ENCODE measurements at regions of chr17 and their contacts with region 1.

Region 1: DNA sequence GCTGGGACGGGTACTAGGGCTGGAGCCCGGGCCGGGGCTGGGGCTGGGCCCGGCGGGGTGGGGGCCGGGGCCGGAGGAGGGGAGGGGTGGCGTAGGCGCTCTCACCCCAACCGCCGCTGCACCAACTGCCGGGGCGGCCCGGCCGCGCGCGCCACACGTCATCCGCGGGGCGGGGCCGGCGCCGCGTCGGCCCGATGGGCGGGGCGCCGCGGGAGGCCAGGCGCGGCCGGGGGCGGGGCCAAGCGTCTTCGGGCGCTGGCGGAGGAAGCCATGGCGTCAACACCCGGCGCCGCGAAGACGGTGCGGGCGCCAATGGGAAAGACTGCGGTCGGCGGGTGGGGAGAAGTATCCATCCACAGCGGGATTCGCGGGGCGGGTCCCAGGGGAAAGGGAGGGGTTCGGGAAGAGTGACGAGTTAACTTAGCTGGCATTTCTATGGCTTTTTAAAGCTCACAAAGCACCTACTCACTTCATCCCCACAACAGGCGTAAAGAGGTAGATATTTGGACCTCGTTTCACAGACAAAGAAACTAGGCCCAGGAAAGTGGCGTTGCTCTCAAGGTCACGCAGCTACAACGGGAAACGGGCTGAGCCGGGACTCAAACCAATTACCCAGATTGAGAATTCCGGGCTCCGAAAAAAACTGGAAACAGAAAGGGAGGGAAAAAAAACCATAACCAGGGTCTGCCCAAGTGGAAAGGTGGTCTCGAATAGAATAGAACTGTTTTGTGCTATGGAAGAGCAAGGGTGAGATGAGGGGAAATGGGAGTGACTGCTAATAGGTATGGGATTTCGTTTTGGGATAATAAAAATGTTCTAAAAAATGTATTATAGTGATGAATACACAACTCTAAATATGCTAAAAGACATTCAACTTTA is at the start of gene SPAG9:
- DNase-seq: peak; percentile 97
- H3K4me3 ChIP-seq: peak within 1 kb of the TSS; percentile 96 to 99 (median 96)
- H3K27ac ChIP-seq: peak within 1 kb of the TSS; percentile 100
- H3K4me1 ChIP-seq: peaks cover 31% of the 10 kb centered on the region
- H3K27me3 ChIP-seq: no peaks in the 10 kb centered on the region
- CTCF ChIP-seq: no peak
- POLR2A ChIP-seq: no peak
- total RNA-seq, gene SPAG9: 73.5 and 75.0 TPM in 2 replicates

Region 2: DNA sequence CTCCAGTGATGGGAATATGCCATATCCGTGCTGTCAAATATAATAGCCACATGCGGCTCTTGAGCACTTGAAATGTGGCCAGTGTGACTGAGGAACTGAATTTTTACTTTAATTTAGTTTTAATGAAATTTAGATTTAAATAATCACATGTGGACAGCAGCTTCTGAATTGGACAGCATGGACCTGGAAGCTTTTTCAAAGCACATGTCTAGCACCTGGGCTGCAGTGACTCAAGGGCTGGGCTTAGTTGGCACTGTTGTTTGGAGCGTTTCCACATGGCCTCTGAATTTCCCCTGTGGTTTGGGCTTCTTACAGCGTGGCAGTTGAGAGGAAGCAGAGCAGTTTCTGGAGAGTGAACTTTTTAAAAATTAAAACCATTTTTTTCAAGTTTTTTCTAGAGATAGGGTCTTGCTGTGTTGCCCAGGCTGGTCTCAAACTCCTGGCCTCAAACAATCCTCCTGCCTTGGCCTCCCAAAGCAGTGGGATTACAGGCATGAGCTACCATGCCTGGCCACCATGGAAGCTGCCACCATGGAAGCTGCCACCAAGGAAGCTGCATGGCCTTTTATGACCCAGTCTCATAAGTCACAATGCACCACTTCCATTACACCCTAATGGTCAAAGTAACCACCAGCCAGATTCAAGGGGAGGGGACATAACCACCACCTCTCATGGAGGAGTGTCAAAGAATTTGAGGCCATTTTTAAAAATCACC is 248.1 kb before region 1 on chr17:
- CTCF ChIA-PET with region 1: no interaction called
- POLR2A ChIA-PET with region 1: no interaction called
- dilution Hi-C with region 1: no loop called
- intact Hi-C with region 1: no loop called
- DNase-seq: no peak
- H3K4me3 ChIP-seq: no peak overlapping the region
- H3K27ac ChIP-seq: no peak overlapping the region
- H3K4me1 ChIP-seq: peaks cover under 1% of the 10 kb centered on the region
- H3K27me3 ChIP-seq: peaks cover 2 to 39% of the 10 kb centered on the region in 2 experiments
- CTCF ChIP-seq: no peak
- POLR2A ChIP-seq: no peak

Region 3: GRCh38 chr17:50931144-50931908 is 189.7 kb before region 1 on chr17:
- CTCF ChIA-PET with region 1: no interaction called
- POLR2A ChIA-PET with region 1: no interaction called
- dilution Hi-C with region 1: no loop called
- intact Hi-C with region 1: no loop called
- DNase-seq: peak; percentile 82
- H3K4me3 ChIP-seq: peak overlapping the region; percentile 37 to 67 (median 61)
- H3K27ac ChIP-seq: peak overlapping the region; percentile 66
- H3K4me1 ChIP-seq: peaks cover 11% of the 10 kb centered on the region
- H3K27me3 ChIP-seq: no peaks in the 10 kb centered on the region
- CTCF ChIP-seq: no peak
- POLR2A ChIP-seq: no peak

Region 4: GRCh38 chr17:51085185-51085805 is 35.7 kb before region 1 on chr17:
- CTCF ChIA-PET with region 1: interaction called, 13 read pairs
- POLR2A ChIA-PET with region 1: no interaction called
- dilution Hi-C with region 1: no loop called
- intact Hi-C with region 1: loop called (anchors 5 kb)
- DNase-seq: peak; percentile 79
- H3K4me3 ChIP-seq: peak overlapping the region in 1 of 3 experiments; percentile 32
- H3K27ac ChIP-seq: peak overlapping the region; percentile 48
- H3K4me1 ChIP-seq: peaks cover 21% of the 10 kb centered on the region
- H3K27me3 ChIP-seq: no peaks in the 10 kb centered on the region
- CTCF ChIP-seq: no peak
- POLR2A ChIP-seq: no peak

Region 5: DNA sequence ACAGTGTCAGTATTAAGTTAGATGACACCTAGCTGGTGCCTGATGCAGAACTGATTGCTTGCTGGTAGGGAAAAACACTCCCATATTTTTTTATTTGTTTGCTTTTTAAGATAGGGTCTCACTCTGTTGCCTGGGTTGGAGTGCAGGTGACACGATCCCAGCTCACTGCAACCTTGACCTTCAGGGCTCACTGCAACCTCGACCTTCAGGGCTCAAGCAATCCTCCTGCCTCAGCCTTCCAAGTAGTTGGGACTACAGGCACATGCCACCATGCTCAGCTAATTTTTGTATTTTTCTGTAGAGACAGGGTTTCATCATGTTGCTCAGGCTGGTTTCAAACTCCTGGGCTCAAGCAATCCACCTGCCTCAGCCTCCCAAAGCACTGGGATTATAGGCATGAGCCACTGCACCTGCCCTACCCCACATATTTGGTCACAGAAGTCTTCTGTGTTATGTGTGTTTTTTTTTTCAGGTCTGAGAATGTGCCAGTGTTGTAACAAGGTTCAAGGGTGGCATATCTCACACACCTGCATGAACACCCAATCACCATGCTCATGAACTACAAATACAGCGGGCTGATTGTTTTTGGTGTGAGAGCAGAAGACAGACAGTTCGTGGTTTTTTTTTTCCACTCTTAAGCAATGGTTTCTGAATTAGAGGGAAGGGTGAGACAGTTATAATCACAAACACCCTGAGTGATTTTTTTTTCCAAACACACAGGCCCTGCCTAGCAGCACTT is 23.1 kb before region 1 on chr17:
- CTCF ChIA-PET with region 1: no interaction called
- POLR2A ChIA-PET with region 1: no interaction called
- dilution Hi-C with region 1: no loop called
- intact Hi-C with region 1: no loop called
- DNase-seq: no peak
- H3K4me3 ChIP-seq: no peak overlapping the region
- H3K27ac ChIP-seq: no peak overlapping the region
- H3K4me1 ChIP-seq: peaks cover 5% of the 10 kb centered on the region
- H3K27me3 ChIP-seq: no peaks in the 10 kb centered on the region
- CTCF ChIP-seq: no peak
- POLR2A ChIP-seq: no peak

Region 6: GRCh38 chr17:51132964-51133319 is 12.0 kb after region 1 on chr17:
- CTCF ChIA-PET with region 1: interaction called, 4 read pairs
- POLR2A ChIA-PET with region 1: no interaction called
- dilution Hi-C with region 1: no loop called
- intact Hi-C with region 1: loop called (anchors 1 kb)
- DNase-seq: peak; percentile 94
- H3K4me3 ChIP-seq: no peak overlapping the region
- H3K27ac ChIP-seq: peak overlapping the region; percentile 82
- H3K4me1 ChIP-seq: peaks cover 23% of the 10 kb centered on the region
- H3K27me3 ChIP-seq: no peaks in the 10 kb centered on the region
- CTCF ChIP-seq: no peak
- POLR2A ChIP-seq: no peak